ENCODE measurements at regions of chr7 and their contacts with region 1.

Region 1: GRCh38 chr7:101702362-101702850 is 73.3 kb upstream of the MYL10 start:
- DNase-seq: no peak
- ATAC-seq: peak in 1 of 4 donors; percentile 18
- H3K4me3 ChIP-seq: no peak overlapping the region
- H3K27ac ChIP-seq: no peak overlapping the region
- H3K4me1 ChIP-seq: no peaks in the 10 kb centered on the region
- H3K27me3 ChIP-seq: no peaks in the 10 kb centered on the region
- CTCF ChIP-seq: no peak

Region 2: GRCh38 chr7:101804967-101805366 is 102.6 kb after region 1 on chr7:
- intact Hi-C with region 1: loop called in 2 of 3 experiments (anchors 10 kb)
- DNase-seq: peak in 2 of 6 donors; percentile 43 to 52
- ATAC-seq: peak; percentile 77 to 89 (median 84)
- H3K4me3 ChIP-seq: no peak overlapping the region
- H3K27ac ChIP-seq: no peak overlapping the region
- H3K4me1 ChIP-seq: no peaks in the 10 kb centered on the region
- H3K27me3 ChIP-seq: peaks cover 0 to 7% (median 2%) of the 10 kb centered on the region in 4 donors
- CTCF ChIP-seq: peak; percentile 23 to 46 (median 40)

Region 3: GRCh38 chr7:101838837-101839483 is 136.6 kb after region 1 on chr7:
- intact Hi-C with region 1: no loop called
- DNase-seq: no peak
- ATAC-seq: no peak
- H3K4me3 ChIP-seq: no peak overlapping the region
- H3K27ac ChIP-seq: no peak overlapping the region
- H3K4me1 ChIP-seq: no peaks in the 10 kb centered on the region
- H3K27me3 ChIP-seq: no peaks in the 10 kb centered on the region
- CTCF ChIP-seq: no peak

Region 4: DNA sequence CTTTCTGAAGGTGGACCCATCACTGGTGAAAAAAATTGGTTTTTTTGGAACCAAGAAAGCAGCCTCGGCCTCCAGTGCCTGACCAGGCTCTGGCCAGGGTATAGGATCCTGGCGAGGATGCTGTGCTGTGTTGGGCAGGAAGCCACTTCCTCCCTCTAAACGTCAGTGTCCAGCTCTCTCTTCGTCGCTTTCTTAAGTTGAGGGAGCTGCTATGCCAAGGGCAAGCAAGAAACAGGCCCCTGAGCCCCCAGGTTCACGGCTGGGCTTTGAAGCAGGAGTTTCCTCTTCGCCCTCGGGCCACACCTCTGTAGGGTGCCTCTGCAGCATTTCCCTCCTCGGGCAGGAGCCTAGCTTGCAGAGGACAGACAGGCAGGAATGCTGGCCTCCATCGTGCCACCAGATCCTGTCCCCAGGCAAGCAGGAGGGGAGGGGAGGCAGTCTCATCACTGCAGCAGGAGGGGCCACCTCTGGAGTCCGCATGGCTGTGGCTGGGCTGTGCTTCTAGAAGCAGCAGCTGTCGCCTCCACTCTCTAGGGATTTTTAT is 296.3 kb after region 1 on chr7:
- intact Hi-C with region 1: no loop called
- DNase-seq: no peak
- ATAC-seq: no peak
- H3K4me3 ChIP-seq: no peak overlapping the region
- H3K27ac ChIP-seq: no peak overlapping the region
- H3K4me1 ChIP-seq: no peaks in the 10 kb centered on the region
- H3K27me3 ChIP-seq: no peaks in the 10 kb centered on the region
- CTCF ChIP-seq: no peak